ENCODE measurements at regions of chr5 and their contacts with region 1.

Region 1: DNA sequence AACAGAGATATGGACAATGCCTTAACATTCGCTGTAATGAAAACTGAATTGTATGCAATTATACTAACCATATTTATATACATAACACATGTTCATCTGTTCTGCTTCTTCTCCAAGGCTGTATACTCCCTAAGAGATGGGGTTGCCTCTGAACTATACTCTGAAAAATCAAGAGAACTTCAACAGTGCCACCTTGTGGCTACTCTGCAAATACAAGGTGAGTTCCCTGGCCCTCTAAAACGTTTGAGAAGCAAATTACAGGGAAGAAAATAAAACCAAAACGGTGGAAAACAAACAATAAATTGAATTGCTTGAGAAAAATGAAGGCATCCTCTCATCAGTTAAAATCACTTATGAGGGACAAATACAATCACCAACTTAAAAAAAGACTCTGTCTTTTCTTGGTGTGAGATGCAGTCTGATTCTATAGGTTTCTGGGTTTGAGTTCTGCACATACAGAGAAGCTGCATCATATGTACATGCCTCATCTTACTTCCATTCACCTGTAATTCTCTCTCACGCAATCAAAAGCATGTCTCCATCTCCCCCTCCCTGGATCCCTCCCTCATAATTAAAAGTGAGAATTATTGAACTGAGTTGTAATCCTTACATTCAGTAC is 98.6 kb downstream of the FBXW11 start:
- DNase-seq: peak; percentile 78
- H3K4me3 Mint-ChIP-seq: no peak overlapping the region
- H3K27ac Mint-ChIP-seq: peak overlapping the region; percentile 78
- H3K4me1 Mint-ChIP-seq: peaks cover 63% of the 10 kb centered on the region
- H3K27me3 Mint-ChIP-seq: no peaks in the 10 kb centered on the region

Region 2: GRCh38 chr5:171272996-171273970 is 634.6 kb before region 1 on chr5:
- CTCF ChIA-PET with region 1: no interaction called
- intact Hi-C with region 1: loop called (anchors 2 kb)
- DNase-seq: peak; percentile 35
- H3K4me3 Mint-ChIP-seq: no peak overlapping the region
- H3K27ac Mint-ChIP-seq: no peak overlapping the region
- H3K4me1 Mint-ChIP-seq: no peaks in the 10 kb centered on the region
- H3K27me3 Mint-ChIP-seq: peaks cover 8% of the 10 kb centered on the region

Region 3: GRCh38 chr5:171409164-171410136 is 498.4 kb before region 1 on chr5:
- CTCF ChIA-PET with region 1: no interaction called
- intact Hi-C with region 1: no loop called
- DNase-seq: no peak
- H3K4me3 Mint-ChIP-seq: no peak overlapping the region
- H3K27ac Mint-ChIP-seq: peak overlapping the region; percentile 80
- H3K4me1 Mint-ChIP-seq: peaks cover 41% of the 10 kb centered on the region
- H3K27me3 Mint-ChIP-seq: no peaks in the 10 kb centered on the region

Region 4: DNA sequence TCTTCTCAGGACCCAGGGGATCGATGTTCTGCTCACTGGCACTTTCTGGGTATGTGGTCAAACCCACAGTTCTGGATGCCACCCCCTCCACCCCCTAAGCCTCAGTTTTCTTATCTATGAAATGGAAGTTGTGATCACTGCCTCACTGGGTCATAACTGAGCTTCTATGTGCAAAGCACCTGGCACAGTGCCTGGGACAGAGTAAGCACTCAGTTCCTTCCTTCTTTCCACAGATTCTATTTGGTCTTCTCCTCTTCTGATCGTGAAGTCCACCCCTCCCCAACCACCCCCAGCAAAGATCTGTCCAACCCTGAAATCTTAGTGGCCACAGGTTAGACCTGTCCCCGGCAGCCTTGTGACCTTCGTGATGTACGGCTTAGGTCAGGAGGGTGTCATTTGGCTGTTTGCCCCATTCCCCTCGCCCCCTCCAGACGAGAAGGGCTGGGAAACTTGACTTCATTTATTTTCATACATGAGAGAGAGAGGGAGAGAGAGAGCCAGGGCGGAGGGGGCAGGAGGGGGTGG is 307.0 kb before region 1 on chr5:
- CTCF ChIA-PET with region 1: no interaction called
- intact Hi-C with region 1: loop called (anchors 1 kb)
- DNase-seq: peak; percentile 31
- H3K4me3 Mint-ChIP-seq: peak overlapping the region; percentile 1
- H3K27ac Mint-ChIP-seq: peak overlapping the region; percentile 14
- H3K4me1 Mint-ChIP-seq: peaks cover 18% of the 10 kb centered on the region
- H3K27me3 Mint-ChIP-seq: peaks cover 32% of the 10 kb centered on the region

Region 5: GRCh38 chr5:171797543-171797942 is 110.3 kb before region 1 on chr5:
- CTCF ChIA-PET with region 1: no interaction called
- intact Hi-C with region 1: no loop called
- DNase-seq: no peak
- H3K4me3 Mint-ChIP-seq: no peak overlapping the region
- H3K27ac Mint-ChIP-seq: no peak overlapping the region
- H3K4me1 Mint-ChIP-seq: peaks cover 2% of the 10 kb centered on the region
- H3K27me3 Mint-ChIP-seq: peaks cover 7% of the 10 kb centered on the region

Region 6: GRCh38 chr5:171850324-171851285 is 57.2 kb before region 1 on chr5:
- CTCF ChIA-PET with region 1: no interaction called
- intact Hi-C with region 1: no loop called
- DNase-seq: peak; percentile 15
- H3K4me3 Mint-ChIP-seq: no peak overlapping the region
- H3K27ac Mint-ChIP-seq: no peak overlapping the region
- H3K4me1 Mint-ChIP-seq: peaks cover under 1% of the 10 kb centered on the region
- H3K27me3 Mint-ChIP-seq: no peaks in the 10 kb centered on the region

Region 7: DNA sequence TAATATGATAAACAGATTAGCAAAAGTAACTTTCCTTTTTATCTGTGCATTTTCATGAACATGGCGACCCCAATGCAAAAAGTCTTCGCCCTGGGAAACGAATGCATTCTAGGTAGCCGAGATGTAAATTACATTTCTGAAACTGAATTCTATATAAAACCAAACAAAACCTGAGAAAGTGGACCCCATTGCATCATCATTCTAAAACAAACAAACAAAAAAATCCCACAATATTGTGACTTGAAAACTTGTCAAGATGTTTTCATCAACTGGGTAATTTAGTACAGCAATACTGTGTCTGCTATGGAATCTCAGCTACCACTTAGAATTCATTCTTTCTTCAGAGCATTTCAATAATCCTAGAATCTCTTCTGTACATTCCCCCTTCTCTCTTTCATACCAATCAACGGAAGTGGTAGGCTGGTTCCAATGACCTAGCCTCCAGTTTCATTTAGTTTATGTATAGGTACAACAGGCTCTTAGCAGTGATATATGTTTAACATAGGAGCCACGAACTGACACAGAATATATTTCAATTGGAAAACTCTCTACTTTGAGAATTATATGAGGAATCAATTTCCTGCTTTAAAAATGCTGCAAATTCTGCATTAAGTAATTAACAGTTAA is 13.0 kb after region 1 on chr5:
- CTCF ChIA-PET with region 1: interaction called, 14 read pairs
- intact Hi-C with region 1: no loop called
- DNase-seq: no peak
- H3K4me3 Mint-ChIP-seq: no peak overlapping the region
- H3K27ac Mint-ChIP-seq: no peak overlapping the region
- H3K4me1 Mint-ChIP-seq: peaks cover 49% of the 10 kb centered on the region
- H3K27me3 Mint-ChIP-seq: no peaks in the 10 kb centered on the region

Region 8: GRCh38 chr5:172035039-172035438 is 127.2 kb after region 1 on chr5:
- CTCF ChIA-PET with region 1: interaction called, 75 read pairs
- intact Hi-C with region 1: loop called (anchors 1 kb)
- DNase-seq: no peak
- H3K4me3 Mint-ChIP-seq: no peak overlapping the region
- H3K27ac Mint-ChIP-seq: no peak overlapping the region
- H3K4me1 Mint-ChIP-seq: peaks cover 13% of the 10 kb centered on the region
- H3K27me3 Mint-ChIP-seq: no peaks in the 10 kb centered on the region

Region 9: GRCh38 chr5:172223901-172224873 is 316.4 kb after region 1 on chr5:
- CTCF ChIA-PET with region 1: interaction called, 5 read pairs
- intact Hi-C with region 1: loop called (anchors 1 kb)
- DNase-seq: peak; percentile 70
- H3K4me3 Mint-ChIP-seq: peak overlapping the region; percentile 11
- H3K27ac Mint-ChIP-seq: peak overlapping the region; percentile 37
- H3K4me1 Mint-ChIP-seq: peaks cover 30% of the 10 kb centered on the region
- H3K27me3 Mint-ChIP-seq: no peaks in the 10 kb centered on the region